PC-9 (cell line): ENCODE measurements at regions of chr7 and their contacts with region 1.

Region 1: DNA sequence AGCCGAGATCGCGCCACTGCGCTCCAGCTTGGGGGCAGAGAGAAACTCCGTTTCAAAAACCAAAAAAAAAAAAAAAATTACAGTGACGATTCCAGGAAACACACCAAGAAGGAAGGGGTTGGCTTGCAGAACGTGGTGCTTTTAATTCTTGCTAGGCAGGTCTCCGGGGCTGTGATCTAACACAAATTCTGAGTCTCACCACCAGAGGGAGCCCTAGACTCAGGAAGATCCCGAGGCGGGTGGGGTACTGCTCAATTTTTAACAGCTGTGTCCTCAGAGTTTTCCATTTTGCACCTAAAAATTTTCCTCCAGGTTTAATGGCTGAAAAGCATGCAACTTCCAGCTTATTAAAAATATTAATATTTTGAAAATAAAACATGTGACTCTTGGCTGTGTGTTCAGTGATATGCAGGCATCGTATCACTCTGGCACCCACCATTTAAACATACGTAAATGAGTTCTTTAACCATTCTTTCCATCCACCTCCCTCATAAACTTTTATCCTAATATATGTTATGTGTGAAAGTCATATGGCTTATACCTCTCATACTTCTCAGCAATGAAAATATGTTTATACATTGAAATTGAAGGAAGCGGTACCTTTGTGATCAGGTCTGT is 26.5 kb upstream of the NUB1 start:
- DNase-seq: peak; percentile 57 to 75
- H3K4me3 ChIP-seq: no peak overlapping the region
- H3K27ac ChIP-seq: no peak overlapping the region
- H3K4me1 ChIP-seq: no peaks in the 10 kb centered on the region
- H3K27me3 ChIP-seq: no peaks in the 10 kb centered on the region
- CTCF ChIP-seq: peak; percentile 97

Region 2: DNA sequence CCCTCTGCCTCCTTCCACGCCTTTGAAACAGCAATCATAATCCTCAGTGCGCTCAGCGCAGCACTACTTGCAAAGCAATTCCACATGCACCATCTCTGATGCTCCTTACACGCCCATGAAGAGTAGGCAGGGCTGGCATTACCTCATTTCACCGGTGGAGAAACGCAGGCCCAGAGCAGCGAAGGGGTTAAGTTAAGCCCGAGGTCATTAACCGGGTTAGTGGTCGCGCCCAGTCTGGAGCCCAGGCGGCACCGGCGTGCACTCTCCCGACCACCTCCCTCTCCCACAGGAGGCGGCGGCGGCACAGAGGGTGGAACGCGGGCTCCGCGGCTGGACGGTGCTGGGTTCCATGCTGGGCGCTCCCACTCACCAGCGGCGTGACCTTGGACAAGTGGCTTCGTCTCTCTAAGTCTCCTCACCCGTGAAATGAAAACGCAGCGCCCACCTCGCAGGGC is 235.1 kb before region 1 on chr7:
- CTCF ChIA-PET with region 1: no interaction called
- POLR2A ChIA-PET with region 1: no interaction called
- intact Hi-C with region 1: no loop called
- DNase-seq: no peak
- H3K4me3 ChIP-seq: peak overlapping the region; percentile 89
- H3K27ac ChIP-seq: peak overlapping the region; percentile 70
- H3K4me1 ChIP-seq: peaks cover 30% of the 10 kb centered on the region
- H3K27me3 ChIP-seq: no peaks in the 10 kb centered on the region
- CTCF ChIP-seq: no peak

Region 3: DNA sequence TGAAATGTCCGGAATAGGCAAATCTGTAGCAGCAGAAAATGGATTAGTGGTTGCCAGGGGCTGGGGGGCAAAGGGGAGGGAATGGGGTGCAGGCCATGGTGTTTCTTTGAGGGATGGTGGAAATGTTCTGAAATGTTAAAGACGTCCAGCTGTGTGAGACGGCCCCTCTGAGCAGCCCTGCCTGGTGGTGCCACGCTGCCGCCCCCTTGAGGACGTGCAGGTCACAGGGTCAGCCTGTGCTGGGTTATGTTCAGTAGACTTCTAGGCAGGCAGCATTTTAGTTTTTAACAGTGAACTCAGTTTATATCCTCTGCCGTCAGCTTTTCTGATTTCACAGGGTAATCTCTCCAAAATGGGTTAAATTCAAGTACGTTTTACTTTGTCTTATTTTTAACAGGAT is 35.9 kb after region 1 on chr7:
- CTCF ChIA-PET with region 1: interaction called, 6 read pairs
- POLR2A ChIA-PET with region 1: no interaction called
- intact Hi-C with region 1: loop called (anchors 1 kb)
- DNase-seq: no peak
- H3K4me3 ChIP-seq: no peak overlapping the region
- H3K27ac ChIP-seq: no peak overlapping the region
- H3K4me1 ChIP-seq: peaks cover 8% of the 10 kb centered on the region
- H3K27me3 ChIP-seq: no peaks in the 10 kb centered on the region
- CTCF ChIP-seq: no peak

Region 4: DNA sequence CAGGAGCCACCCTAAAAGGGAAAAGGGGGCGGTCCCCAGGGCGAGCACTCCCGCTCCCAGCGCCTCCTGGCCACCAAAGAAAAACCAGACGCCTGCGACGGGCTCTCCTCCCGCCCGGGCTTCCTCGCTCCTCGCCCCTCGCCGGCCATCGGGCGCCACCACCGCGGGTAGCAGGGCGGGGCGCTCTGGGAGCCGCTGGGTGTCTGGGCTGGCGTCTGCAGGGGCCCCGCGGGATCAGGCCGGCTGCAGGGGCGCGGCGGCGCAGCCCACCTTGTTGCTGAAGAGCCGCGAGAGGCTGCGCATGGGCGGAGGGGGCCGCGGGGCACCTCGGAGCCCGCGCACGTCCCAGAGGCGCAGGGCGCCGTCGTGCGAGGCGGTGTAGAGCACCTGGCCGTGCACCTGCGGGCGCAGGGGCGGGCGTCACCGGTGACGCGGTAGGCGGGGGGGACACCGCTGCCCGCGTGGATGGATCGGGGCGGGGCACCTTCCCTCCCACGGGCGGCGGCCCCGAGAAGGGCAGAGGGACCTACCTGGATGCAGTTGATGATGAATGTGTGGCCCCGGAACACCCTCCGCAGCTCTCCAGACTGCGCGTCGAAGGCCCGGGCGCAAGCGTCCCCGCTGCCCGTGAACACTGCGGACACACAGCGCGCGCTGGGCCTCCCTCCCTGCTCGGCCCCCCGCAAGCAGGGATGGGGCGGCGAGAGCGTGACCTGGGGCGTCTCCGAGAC is 66.4 kb after region 1 on chr7:
- CTCF ChIA-PET with region 1: no interaction called
- POLR2A ChIA-PET with region 1: no interaction called
- intact Hi-C with region 1: no loop called
- DNase-seq: no peak
- H3K4me3 ChIP-seq: no peak overlapping the region
- H3K27ac ChIP-seq: no peak overlapping the region
- H3K4me1 ChIP-seq: peaks cover 4% of the 10 kb centered on the region
- H3K27me3 ChIP-seq: no peaks in the 10 kb centered on the region
- CTCF ChIP-seq: no peak

Region 5: DNA sequence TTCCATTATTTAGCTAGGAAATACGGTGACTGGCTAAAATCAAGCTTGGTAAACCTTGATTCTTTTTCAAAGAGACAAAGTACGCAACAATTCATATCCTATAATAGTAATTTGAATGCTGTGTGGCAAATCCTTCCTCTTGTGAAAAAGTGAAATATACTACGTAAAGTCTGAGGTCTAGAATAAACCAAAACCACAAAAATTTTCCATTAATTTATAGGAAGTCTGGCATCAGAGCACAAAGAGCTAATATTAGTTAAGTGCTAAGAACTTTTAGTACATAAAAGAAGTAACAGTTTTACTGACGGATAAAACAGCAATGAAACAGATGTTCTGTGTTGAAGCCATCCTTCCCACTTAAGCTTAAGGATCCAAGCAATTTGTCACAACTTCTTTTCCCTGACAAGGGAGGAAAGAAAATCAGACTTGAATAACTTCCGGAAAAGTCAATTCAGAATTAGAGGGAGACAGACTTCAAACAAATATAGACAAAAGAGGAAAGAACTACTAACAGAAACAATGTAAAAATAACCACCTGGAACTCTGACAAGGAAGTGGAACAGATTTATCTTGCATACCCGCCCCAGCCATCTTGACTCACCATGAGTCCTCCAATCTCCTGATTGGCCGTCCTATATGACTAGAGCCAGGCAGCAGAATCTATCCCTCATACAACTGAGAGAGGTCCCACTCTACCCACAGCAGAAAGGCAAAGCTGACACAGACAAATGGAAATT is 170.0 kb after region 1 on chr7:
- CTCF ChIA-PET with region 1: no interaction called
- POLR2A ChIA-PET with region 1: no interaction called
- intact Hi-C with region 1: no loop called
- DNase-seq: peak; percentile 66 to 79
- H3K4me3 ChIP-seq: no peak overlapping the region
- H3K27ac ChIP-seq: peak overlapping the region; percentile 41
- H3K4me1 ChIP-seq: peaks cover 45% of the 10 kb centered on the region
- H3K27me3 ChIP-seq: no peaks in the 10 kb centered on the region
- CTCF ChIP-seq: no peak

Region 6: DNA sequence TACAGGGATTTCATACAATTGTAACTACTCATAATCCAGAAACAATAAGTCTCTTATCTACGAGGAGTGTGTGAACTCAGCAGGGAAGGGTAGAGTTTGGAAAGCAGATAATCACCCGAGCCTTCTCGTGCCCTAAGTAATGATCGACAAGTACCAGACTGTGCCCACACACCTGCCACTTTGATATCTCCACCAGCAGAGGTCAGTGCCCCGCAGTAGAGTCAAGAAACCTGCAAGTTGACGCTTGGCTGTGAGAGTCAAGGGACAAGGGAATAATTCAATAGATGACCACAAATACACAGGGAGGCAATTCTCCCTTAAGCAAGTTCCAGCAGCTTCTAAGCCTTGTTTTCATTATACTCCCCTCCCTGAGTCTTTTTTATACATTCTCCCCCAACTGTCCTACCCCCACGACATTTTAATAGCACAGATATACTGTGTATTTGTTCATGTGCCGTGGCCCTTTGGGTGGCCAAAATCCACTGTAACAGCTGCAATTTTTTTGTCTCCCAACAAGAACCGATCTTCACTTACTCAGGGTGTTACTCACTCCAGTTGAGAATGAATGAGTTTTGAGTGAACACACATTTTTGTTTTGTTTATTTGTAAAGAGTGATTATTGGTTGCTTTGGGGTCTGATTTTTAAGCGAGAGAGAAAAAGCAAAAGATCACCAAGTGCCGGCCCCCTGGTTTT is 311.4 kb after region 1 on chr7:
- CTCF ChIA-PET with region 1: no interaction called
- POLR2A ChIA-PET with region 1: no interaction called
- intact Hi-C with region 1: no loop called
- DNase-seq: peak; percentile 37 to 55
- H3K4me3 ChIP-seq: no peak overlapping the region
- H3K27ac ChIP-seq: no peak overlapping the region
- H3K4me1 ChIP-seq: peaks cover 16% of the 10 kb centered on the region
- H3K27me3 ChIP-seq: no peaks in the 10 kb centered on the region
- CTCF ChIP-seq: peak; percentile 65

Region 7: GRCh38 chr7:151759591-151760042 is 444.5 kb after region 1 on chr7:
- CTCF ChIA-PET with region 1: no interaction called
- POLR2A ChIA-PET with region 1: no interaction called
- intact Hi-C with region 1: loop called (anchors 1 kb)
- DNase-seq: peak; percentile 60 to 75
- H3K4me3 ChIP-seq: no peak overlapping the region
- H3K27ac ChIP-seq: no peak overlapping the region
- H3K4me1 ChIP-seq: peaks cover 15% of the 10 kb centered on the region
- H3K27me3 ChIP-seq: no peaks in the 10 kb centered on the region
- CTCF ChIP-seq: peak; percentile 99

Region 8: DNA sequence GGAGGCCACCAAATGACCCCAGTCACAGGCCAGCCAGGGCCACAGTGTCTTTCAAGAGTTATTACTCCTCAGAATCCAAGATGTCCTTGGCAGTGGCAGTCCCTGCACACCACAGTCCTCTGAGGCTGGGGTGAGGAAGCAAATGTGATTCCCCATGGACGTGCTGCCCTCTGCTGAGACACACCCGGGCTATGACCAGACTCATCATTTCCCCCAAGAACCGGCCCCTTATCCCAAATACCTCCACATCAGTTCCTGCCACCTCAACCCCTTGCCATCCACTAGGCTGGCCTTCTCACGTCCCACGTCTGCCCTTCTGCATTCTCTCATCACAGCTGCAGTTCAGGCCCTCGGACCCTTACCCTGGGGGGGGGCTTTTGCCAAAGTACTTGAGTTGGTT is 556.8 kb after region 1 on chr7:
- CTCF ChIA-PET with region 1: no interaction called
- POLR2A ChIA-PET with region 1: no interaction called
- intact Hi-C with region 1: loop called (anchors 5 kb)
- DNase-seq: peak in 1 of 2 experiments; percentile 20
- H3K4me3 ChIP-seq: no peak overlapping the region
- H3K27ac ChIP-seq: no peak overlapping the region
- H3K4me1 ChIP-seq: peaks cover 6% of the 10 kb centered on the region; the same call in 1 of the 2 replicates
- H3K27me3 ChIP-seq: peaks cover 8% of the 10 kb centered on the region; the same call in 1 of the 2 replicates
- CTCF ChIP-seq: peak; percentile 42; the same call in 1 of the 2 replicates

Region 9: GRCh38 chr7:152025077-152025936 is 710.2 kb after region 1 on chr7 and contains the start of gene GALNT11:
- CTCF ChIA-PET with region 1: interaction called, 10 read pairs
- POLR2A ChIA-PET with region 1: no interaction called
- intact Hi-C with region 1: no loop called
- DNase-seq: peak; percentile 67 to 89
- H3K4me3 ChIP-seq: peak within 1 kb of the TSS; percentile 78
- H3K27ac ChIP-seq: no peak within 1 kb of the TSS
- H3K4me1 ChIP-seq: peaks cover 16% of the 10 kb centered on the region
- H3K27me3 ChIP-seq: no peaks in the 10 kb centered on the region
- CTCF ChIP-seq: peak; percentile 36; the same call in 1 of the 2 replicates
- total RNA-seq, gene GALNT11: 26.3 and 28.8 TPM in 2 replicates